ENCODE measurements at regions of chr5 and their contacts with region 1.

Region 1: DNA sequence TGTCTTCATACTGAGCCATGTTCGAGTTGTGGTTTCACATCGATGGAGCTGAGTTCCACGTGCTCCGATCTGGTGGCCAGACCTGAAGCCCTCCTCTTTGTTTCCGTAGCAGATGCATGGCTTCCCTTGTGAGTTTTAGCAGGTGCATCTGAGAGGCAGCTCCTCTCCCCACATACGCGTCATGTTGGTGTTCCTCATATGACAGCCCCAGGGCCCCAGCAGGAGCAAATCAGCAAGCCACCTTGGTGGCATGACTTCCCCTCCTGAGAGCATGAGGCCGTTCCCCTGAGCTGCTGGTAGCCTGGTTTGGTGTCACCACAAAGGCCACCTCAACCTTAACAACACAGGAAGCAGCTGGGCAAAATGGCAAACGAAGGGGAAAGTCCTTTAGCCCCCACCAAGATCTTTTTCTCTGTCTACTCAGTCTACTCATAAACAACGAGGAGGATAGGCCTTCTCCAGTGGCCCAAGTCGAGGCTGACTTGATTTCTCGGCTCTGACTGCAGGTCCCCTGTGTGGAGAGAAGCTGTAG is 5.9 kb downstream of the CYFIP2 start:
- DNase-seq: peak; percentile 95
- H3K4me3 Mint-ChIP-seq: peak overlapping the region; percentile 96
- H3K27ac Mint-ChIP-seq: peak overlapping the region; percentile 99
- H3K4me1 Mint-ChIP-seq: peaks cover 81% of the 10 kb centered on the region
- H3K27me3 Mint-ChIP-seq: no peaks in the 10 kb centered on the region

Region 2: GRCh38 chr5:156431956-156432829 is 839.6 kb before region 1 on chr5:
- intact Hi-C with region 1: no loop called
- DNase-seq: no peak
- H3K4me3 Mint-ChIP-seq: no peak overlapping the region
- H3K27ac Mint-ChIP-seq: no peak overlapping the region
- H3K4me1 Mint-ChIP-seq: peaks cover 3% of the 10 kb centered on the region
- H3K27me3 Mint-ChIP-seq: peaks cover 15% of the 10 kb centered on the region

Region 3: GRCh38 chr5:157180374-157181264 is 91.2 kb before region 1 on chr5 and contains the start of gene ITK:
- intact Hi-C with region 1: loop called (anchors 1 kb)
- DNase-seq: peak; percentile 89
- H3K4me3 Mint-ChIP-seq: peak within 1 kb of the TSS; percentile 98
- H3K27ac Mint-ChIP-seq: peak within 1 kb of the TSS; percentile 99
- H3K4me1 Mint-ChIP-seq: peaks cover 40% of the 10 kb centered on the region
- H3K27me3 Mint-ChIP-seq: no peaks in the 10 kb centered on the region
- total RNA-seq, gene ITK: 230 and 237 TPM in 2 replicates

Region 4: DNA sequence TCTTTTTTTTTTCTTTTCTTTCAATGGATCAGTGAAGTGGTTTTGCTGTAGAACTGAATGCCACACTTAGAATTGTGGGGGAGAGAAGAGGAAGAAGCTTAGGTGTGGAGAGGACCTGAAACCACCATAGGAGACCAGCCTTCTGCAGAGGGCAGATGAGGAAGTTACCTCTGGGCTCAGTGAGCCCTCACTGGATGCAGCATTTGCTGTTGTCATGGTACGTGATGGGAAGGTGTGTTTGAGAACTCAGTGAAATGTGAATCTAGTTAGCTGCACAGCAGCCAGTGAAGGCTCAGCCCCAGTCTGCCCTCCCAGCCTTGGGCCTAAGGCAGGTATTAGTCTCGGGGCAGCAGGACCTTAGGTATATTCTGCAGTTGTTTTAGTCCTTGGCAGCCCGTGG is 11.6 kb after region 1 on chr5:
- intact Hi-C with region 1: loop called (anchors 1 kb)
- DNase-seq: peak; percentile 80
- H3K4me3 Mint-ChIP-seq: peak overlapping the region; percentile 61
- H3K27ac Mint-ChIP-seq: peak overlapping the region; percentile 81
- H3K4me1 Mint-ChIP-seq: peaks cover 70% of the 10 kb centered on the region
- H3K27me3 Mint-ChIP-seq: no peaks in the 10 kb centered on the region